Activated CD4-positive, alpha-beta T cell treated with anti-CD3 and anti-CD28 coated beads for 36 hours (primary cell): ENCODE measurements at regions of chr19 and their contacts with region 1.

Region 1: DNA sequence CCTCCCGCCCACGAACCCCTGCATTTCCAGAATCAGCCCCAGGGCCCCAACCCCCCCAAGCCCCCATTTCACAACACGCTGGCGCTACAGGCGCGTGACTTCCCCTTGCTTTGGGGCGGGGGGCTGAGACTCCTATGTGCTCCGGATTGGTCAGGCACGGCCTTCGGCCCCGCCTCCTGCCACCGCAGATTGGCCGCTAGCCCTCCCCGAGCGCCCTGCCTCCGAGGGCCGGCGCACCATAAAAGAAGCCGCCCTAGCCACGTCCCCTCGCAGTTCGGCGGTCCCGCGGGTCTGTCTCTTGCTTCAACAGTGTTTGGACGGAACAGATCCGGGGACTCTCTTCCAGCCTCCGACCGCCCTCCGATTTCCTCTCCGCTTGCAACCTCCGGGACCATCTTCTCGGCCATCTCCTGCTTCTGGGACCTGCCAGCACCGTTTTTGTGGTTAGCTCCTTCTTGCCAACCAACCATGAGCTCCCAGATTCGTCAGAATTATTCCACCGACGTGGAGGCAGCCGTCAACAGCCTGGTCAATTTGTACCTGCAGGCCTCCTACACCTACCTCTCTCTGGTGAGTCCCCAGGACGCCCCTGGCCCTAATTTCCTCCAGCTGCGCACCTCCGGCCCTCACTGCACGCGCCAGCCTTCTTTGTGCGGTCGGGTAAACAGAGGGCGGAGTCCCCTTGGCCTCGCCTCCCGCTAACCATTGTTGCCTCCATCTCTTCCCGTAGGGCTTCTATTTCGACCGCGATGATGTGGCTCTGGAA is at the start of gene FTL:
- DNase-seq: peak; percentile 95
- ATAC-seq: peak; percentile 79
- H3K4me3 Mint-ChIP-seq: peak within 1 kb of the TSS; percentile 86
- H3K27ac Mint-ChIP-seq: peak within 1 kb of the TSS; percentile 90
- H3K4me1 Mint-ChIP-seq: peaks cover 53% of the 10 kb centered on the region
- H3K27me3 Mint-ChIP-seq: no peaks in the 10 kb centered on the region
- total RNA-seq, gene FTL: 809 to 1,111 TPM

Region 2: GRCh38 chr19:48812094-48812929 is 152.9 kb before region 1 on chr19:
- CTCF ChIA-PET with region 1: interaction called, 4 read pairs
- POLR2A ChIA-PET with region 1: no interaction called
- intact Hi-C with region 1: loop called in 1 of 2 experiments (anchors 1 kb)
- DNase-seq: peak; percentile 78
- ATAC-seq: peak; percentile 40
- H3K4me3 Mint-ChIP-seq: peak overlapping the region; percentile 85
- H3K27ac Mint-ChIP-seq: peak overlapping the region; percentile 37
- H3K4me1 Mint-ChIP-seq: peaks cover 29% of the 10 kb centered on the region
- H3K27me3 Mint-ChIP-seq: no peaks in the 10 kb centered on the region

Region 3: GRCh38 chr19:48842789-48843162 is 122.4 kb before region 1 on chr19:
- CTCF ChIA-PET with region 1: interaction called, 12 read pairs
- POLR2A ChIA-PET with region 1: no interaction called
- intact Hi-C with region 1: loop called in 1 of 2 experiments (anchors 2 kb)
- DNase-seq: peak; percentile 62
- ATAC-seq: peak; percentile 53
- H3K4me3 Mint-ChIP-seq: no peak overlapping the region
- H3K27ac Mint-ChIP-seq: no peak overlapping the region
- H3K4me1 Mint-ChIP-seq: no peaks in the 10 kb centered on the region
- H3K27me3 Mint-ChIP-seq: no peaks in the 10 kb centered on the region

Region 4: DNA sequence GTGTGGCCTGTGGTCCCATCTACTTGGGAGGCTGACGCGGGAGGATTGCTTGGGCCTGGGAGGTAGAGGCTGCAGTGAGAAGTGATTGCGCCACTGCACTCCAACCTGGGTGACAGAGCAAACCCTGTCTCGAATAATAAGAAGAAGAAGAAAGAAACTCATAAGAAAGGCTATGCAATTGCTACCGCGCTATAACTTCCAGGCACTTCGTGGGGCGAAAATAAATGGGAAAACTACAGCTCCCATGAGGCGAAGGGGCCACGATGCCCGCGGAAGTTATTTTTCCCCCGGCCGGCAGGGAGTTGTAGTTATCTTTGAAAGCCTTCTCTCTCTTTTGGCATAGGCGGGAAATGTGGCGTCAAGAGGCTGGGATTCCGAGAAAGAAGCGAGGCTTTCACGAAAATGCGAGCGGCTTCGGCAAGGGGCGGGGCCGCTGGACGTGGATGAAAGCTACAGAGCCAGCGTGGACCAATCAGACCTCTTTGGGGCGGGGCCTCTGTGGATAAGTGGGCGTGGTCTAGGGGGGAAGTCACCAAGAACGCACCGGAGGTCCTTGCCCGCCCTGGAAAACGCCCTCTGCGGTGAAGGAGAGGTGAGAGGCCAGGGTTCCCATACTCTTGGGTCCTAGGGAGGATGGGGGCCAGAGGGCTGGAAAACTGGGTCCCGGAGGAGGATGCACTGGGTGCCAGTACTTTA is 65.3 kb before region 1 on chr19 and contains the start of gene NUCB1:
- CTCF ChIA-PET with region 1: interaction called, 12 read pairs
- POLR2A ChIA-PET with region 1: interaction called, 5 read pairs
- intact Hi-C with region 1: loop called (anchors 1 to 2 kb)
- DNase-seq: peak; percentile 100
- ATAC-seq: peak; percentile 95
- H3K4me3 Mint-ChIP-seq: peak within 1 kb of the TSS; percentile 99
- H3K27ac Mint-ChIP-seq: peak within 1 kb of the TSS; percentile 98
- H3K4me1 Mint-ChIP-seq: peaks cover 34% of the 10 kb centered on the region
- H3K27me3 Mint-ChIP-seq: peaks cover 5% of the 10 kb centered on the region
- total RNA-seq, gene NUCB1: 115 to 118 TPM

Region 5: DNA sequence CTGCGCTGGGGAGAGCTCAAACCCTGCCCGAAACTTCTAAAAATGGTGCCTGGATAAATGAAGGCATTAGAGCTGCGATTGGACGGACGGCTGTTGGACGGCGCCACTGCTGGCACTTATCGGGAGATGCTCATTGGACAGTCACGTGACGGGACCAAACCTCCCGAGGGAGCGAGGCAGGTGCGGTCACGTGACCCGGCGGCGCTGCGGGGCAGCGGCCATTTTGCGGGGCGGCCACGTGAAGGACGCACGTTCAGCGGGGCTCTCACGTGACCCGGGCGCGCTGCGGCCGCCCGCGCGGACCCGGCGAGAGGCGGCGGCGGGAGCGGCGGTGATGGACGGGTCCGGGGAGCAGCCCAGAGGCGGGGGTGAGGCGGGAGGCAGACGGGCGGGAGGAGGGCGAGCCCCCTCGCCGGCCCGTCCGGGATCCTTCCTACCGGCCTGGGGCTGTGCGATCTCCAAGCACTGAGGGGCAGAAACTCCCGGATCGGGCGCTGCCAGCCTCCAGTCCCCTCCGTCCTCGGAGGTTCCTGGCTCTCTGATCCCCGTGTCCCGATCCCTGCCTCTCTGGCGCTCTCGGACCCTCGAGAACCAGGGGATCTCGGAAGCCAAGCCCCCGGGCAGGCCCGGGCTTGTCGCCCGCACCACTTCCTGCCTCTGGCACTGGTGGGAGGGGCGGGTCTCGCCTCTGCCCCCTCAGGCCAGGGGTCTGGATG is 10.5 kb before region 1 on chr19 and contains the start of gene BAX:
- CTCF ChIA-PET with region 1: interaction called, 5 read pairs
- POLR2A ChIA-PET with region 1: interaction called, 12 read pairs
- intact Hi-C with region 1: loop called in 1 of 2 experiments (anchors 1 kb)
- DNase-seq: peak; percentile 98
- ATAC-seq: peak; percentile 89
- H3K4me3 Mint-ChIP-seq: peak within 1 kb of the TSS; percentile 74
- H3K27ac Mint-ChIP-seq: peak within 1 kb of the TSS; percentile 87
- H3K4me1 Mint-ChIP-seq: peaks cover 26% of the 10 kb centered on the region
- H3K27me3 Mint-ChIP-seq: no peaks in the 10 kb centered on the region
- total RNA-seq, gene BAX: 128 to 143 TPM

Region 6: GRCh38 chr19:49690656-49691242 is 725.5 kb after region 1 on chr19 and contains the start of gene CPT1C:
- CTCF ChIA-PET with region 1: no interaction called
- POLR2A ChIA-PET with region 1: no interaction called
- intact Hi-C with region 1: no loop called
- DNase-seq: peak; percentile 77
- ATAC-seq: peak; percentile 72
- H3K4me3 Mint-ChIP-seq: peak within 1 kb of the TSS; percentile 62
- H3K27ac Mint-ChIP-seq: peak within 1 kb of the TSS; percentile 51
- H3K4me1 Mint-ChIP-seq: peaks cover 23% of the 10 kb centered on the region
- H3K27me3 Mint-ChIP-seq: peaks cover 16% of the 10 kb centered on the region
- total RNA-seq, gene CPT1C: 1.1 to 1.6 TPM